ENCODE measurements at regions of chr7 and their contacts with region 1.

Region 1: GRCh38 chr7:117041007-117041406 is 87.7 kb downstream of the ST7 start:
- DNase-seq: no peak
- H3K4me3 Mint-ChIP-seq: no peak overlapping the region
- H3K27ac Mint-ChIP-seq: no peak overlapping the region
- H3K4me1 Mint-ChIP-seq: peaks cover 10% of the 10 kb centered on the region
- H3K27me3 Mint-ChIP-seq: no peaks in the 10 kb centered on the region

Region 2: GRCh38 chr7:117023325-117023854 is 17.6 kb before region 1 on chr7:
- CTCF ChIA-PET with region 1: no interaction called
- POLR2A ChIA-PET with region 1: no interaction called
- intact Hi-C with region 1: loop called (anchors 1 kb)
- DNase-seq: no peak
- H3K4me3 Mint-ChIP-seq: no peak overlapping the region
- H3K27ac Mint-ChIP-seq: no peak overlapping the region
- H3K4me1 Mint-ChIP-seq: peaks cover 16% of the 10 kb centered on the region
- H3K27me3 Mint-ChIP-seq: no peaks in the 10 kb centered on the region